PC-9 (cell line): ENCODE measurements at regions of chr4 and their contacts with region 1.

Region 1: DNA sequence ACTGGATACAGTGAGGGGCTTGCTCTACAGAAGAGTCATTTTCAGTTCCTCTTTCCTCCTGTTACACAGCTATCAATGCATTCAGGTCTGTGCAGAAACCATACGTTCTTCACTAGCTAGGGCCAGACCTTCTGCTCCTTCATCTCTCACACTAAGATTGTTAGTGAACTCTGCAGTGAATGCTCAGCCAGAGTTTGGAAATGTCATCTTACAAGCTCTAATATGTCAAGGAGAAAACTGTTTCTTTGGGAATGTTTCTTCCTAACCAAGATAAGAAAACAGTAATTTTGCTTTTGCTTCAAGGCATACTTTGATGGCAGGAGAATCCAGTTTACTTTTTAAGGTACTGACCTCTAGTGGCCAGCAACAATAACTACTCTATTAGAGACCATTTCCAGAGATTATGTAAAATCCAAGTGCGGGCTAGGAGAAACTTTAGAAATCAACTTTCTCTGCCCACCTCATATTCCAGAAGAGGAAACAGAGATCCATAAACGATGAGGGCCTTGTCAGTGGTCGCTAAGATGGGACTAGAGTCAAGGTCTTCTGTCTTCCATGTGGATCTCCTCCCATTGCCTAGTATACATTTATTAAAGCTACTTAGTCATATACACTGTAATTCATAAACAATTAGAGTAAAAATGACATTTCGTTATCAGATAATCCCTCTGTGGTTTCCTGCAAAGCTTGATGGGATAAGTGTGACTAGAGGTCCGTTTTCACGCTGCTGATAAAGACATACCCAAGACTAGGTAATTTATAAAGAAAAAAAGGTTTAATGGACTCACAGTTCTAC is 12.1 kb upstream of the CC2D2A start:
- DNase-seq: no peak
- H3K4me3 ChIP-seq: no peak overlapping the region
- H3K27ac ChIP-seq: no peak overlapping the region
- H3K4me1 ChIP-seq: no peaks in the 10 kb centered on the region
- H3K27me3 ChIP-seq: no peaks in the 10 kb centered on the region
- CTCF ChIP-seq: peak; percentile 78

Region 2: GRCh38 chr4:15162465-15163283 is 294.9 kb before region 1 on chr4:
- CTCF ChIA-PET with region 1: interaction called, 11 read pairs
- POLR2A ChIA-PET with region 1: no interaction called
- intact Hi-C with region 1: no loop called
- DNase-seq: peak in 1 of 2 experiments; percentile 48
- H3K4me3 ChIP-seq: no peak overlapping the region
- H3K27ac ChIP-seq: no peak overlapping the region
- H3K4me1 ChIP-seq: peaks cover 15% of the 10 kb centered on the region
- H3K27me3 ChIP-seq: no peaks in the 10 kb centered on the region
- CTCF ChIP-seq: peak; percentile 51; the same call in 1 of the 2 replicates

Region 3: DNA sequence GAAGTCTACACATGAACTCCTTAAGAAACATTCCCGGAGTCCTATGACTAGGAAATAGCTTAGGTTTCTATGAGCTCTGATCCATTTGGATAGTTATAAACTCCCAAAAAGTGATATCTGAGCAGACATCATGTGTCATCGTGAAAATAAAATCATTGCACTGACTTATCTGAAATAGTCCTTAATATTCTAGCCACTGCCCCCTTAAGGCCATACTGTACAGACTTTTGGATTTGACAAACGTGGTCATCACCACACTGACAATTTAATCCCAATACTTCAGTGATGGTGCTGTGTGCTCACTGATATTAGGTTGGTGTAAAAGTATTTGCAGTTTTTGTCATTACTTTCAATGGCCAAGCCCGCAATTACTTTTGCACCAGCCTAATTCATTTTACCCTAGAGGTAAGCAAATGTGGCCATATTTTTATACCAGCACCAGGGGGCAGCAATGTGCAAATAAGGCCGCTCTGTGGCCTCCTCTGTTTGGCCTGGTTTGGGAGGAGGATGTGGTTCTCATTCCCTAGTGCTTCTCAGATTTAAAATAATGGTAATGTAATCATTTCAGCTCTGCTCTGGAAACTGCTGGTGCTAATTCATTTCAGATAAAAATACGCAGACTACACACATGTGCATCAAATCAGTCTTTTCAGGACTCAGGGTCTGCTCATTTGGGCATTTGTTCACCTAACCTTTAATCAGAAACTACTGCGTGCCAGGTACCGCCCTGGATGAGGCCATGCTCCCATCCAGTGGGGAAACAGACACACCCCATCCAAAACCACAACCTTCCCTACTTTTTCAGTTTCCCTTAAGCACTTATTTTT is 226.1 kb before region 1 on chr4:
- CTCF ChIA-PET with region 1: no interaction called
- POLR2A ChIA-PET with region 1: no interaction called
- intact Hi-C with region 1: loop called (anchors 2 kb)
- DNase-seq: peak in 1 of 2 experiments; percentile 61
- H3K4me3 ChIP-seq: no peak overlapping the region
- H3K27ac ChIP-seq: no peak overlapping the region
- H3K4me1 ChIP-seq: no peaks in the 10 kb centered on the region
- H3K27me3 ChIP-seq: no peaks in the 10 kb centered on the region
- CTCF ChIP-seq: peak; percentile 73

Region 4: DNA sequence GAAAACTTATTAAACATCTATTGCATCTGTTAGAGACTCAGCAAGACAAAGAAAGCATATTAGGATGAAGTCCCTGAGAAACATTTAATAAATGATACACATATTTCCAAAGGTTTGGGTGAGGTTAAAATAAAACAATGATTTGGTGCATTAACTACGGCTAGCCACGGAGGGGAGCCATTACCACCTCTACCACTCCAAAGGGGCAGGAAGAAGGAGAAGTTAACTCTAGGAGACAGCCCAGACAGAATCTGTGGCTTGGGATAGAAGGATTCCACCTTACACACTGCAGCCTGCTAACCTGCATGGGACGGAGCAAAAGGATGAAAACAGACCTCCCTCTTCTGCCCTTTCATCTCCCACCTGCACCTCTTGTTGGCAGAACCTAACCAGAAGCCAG is 218.9 kb before region 1 on chr4:
- CTCF ChIA-PET with region 1: no interaction called
- POLR2A ChIA-PET with region 1: no interaction called
- intact Hi-C with region 1: loop called (anchors 1 kb)
- DNase-seq: peak in 1 of 2 experiments; percentile 34
- H3K4me3 ChIP-seq: no peak overlapping the region
- H3K27ac ChIP-seq: no peak overlapping the region
- H3K4me1 ChIP-seq: no peaks in the 10 kb centered on the region
- H3K27me3 ChIP-seq: no peaks in the 10 kb centered on the region
- CTCF ChIP-seq: peak; percentile 66

Region 5: GRCh38 chr4:15938182-15938581 is 480.6 kb after region 1 on chr4:
- CTCF ChIA-PET with region 1: no interaction called
- POLR2A ChIA-PET with region 1: no interaction called
- intact Hi-C with region 1: no loop called
- DNase-seq: peak; percentile 71 to 72
- H3K4me3 ChIP-seq: peak overlapping the region; percentile 34; the same call in 1 of the 2 replicates
- H3K27ac ChIP-seq: peak overlapping the region; percentile 34; the same call in 1 of the 2 replicates
- H3K4me1 ChIP-seq: peaks cover 27% of the 10 kb centered on the region
- H3K27me3 ChIP-seq: no peaks in the 10 kb centered on the region
- CTCF ChIP-seq: no peak